GM12878 (cell line): ENCODE measurements at regions of chrX and their contacts with region 1.

Region 1: DNA sequence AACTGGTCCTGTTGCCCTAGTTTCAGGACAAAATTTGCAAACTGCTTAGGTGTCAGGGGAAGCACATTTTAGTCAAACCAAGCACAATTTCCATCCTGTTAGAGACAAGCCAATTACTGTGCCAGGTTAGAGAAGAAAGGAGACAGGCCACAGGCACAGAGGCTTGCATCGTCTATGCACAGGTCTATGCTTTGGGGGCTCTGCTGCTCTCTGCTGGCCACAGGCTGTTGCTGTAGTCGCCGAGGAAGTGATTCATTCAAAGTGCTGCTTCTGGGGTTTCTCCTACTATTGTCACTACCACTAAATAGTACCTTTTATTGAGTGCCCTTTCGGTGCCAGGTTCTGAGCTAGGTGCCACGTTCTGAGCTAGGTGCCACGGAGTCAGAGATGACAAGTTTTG is 45.5 kb downstream of the VGLL1 start:
- DNase-seq: no peak
- ATAC-seq: peak; percentile 100
- H3K4me3 ChIP-seq: no peak overlapping the region
- H3K27ac ChIP-seq: no peak overlapping the region
- H3K4me1 ChIP-seq: no peaks in the 10 kb centered on the region
- H3K27me3 ChIP-seq: no peaks in the 10 kb centered on the region
- CTCF ChIP-seq: peak; percentile 71 to 82 (median 82)
- EP300 ChIP-seq: no peak
- POLR2A ChIP-seq: no peak
- RAD21 ChIP-seq: peak; percentile 67

Region 2: GRCh38 chrX:136268051-136269048 is 309.2 kb before region 1 on chrX:
- CTCF ChIA-PET with region 1: interaction called, 7 read pairs
- POLR2A ChIA-PET with region 1: interaction called, 3 read pairs
- RAD21 ChIA-PET with region 1: no interaction called
- SMC1A ChIA-PET with region 1: no interaction called
- in situ Hi-C with region 1: no loop called
- intact Hi-C with region 1: loop called (anchors 10 kb)
- DNase-seq: no peak
- ATAC-seq: peak; percentile 91
- H3K4me3 ChIP-seq: no peak overlapping the region
- H3K27ac ChIP-seq: no peak overlapping the region
- H3K4me1 ChIP-seq: no peaks in the 10 kb centered on the region; the same call in 1 of the 2 replicates
- H3K27me3 ChIP-seq: no peaks in the 10 kb centered on the region
- CTCF ChIP-seq: peak; percentile 74 to 78 (median 76); a peak in 5 of 6 replicates
- EP300 ChIP-seq: no peak
- POLR2A ChIP-seq: no peak
- RAD21 ChIP-seq: peak; percentile 87

Region 3: DNA sequence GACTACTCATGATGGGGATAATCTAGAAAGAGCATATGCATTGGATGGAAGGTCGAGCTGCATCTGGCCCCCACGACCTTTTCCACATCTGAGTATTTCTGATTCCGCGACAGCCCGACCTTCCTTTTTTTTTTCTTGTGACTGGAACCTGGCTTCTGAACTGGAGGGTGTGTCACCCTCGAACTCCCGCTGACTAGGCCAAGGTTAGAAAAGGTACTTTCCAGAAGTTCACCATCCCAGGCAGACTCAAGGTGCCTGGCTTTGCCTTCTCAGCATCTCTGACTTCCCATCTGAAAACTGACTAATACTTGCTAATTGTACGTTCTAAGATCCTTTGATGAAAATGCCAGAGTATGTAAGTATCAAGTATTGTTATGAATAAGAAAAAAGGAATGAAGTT is 21.1 kb after region 1 on chrX:
- CTCF ChIA-PET with region 1: interaction called, 8 read pairs
- POLR2A ChIA-PET with region 1: no interaction called
- RAD21 ChIA-PET with region 1: no interaction called
- SMC1A ChIA-PET with region 1: interaction called, 17 read pairs
- in situ Hi-C with region 1: no loop called
- intact Hi-C with region 1: no loop called
- DNase-seq: no peak
- ATAC-seq: no peak; the same call in 2 of the 3 replicates
- H3K4me3 ChIP-seq: no peak overlapping the region
- H3K27ac ChIP-seq: no peak overlapping the region
- H3K4me1 ChIP-seq: no peaks in the 10 kb centered on the region
- H3K27me3 ChIP-seq: no peaks in the 10 kb centered on the region
- CTCF ChIP-seq: no peak
- EP300 ChIP-seq: no peak
- POLR2A ChIP-seq: no peak
- RAD21 ChIP-seq: no peak

Region 4: DNA sequence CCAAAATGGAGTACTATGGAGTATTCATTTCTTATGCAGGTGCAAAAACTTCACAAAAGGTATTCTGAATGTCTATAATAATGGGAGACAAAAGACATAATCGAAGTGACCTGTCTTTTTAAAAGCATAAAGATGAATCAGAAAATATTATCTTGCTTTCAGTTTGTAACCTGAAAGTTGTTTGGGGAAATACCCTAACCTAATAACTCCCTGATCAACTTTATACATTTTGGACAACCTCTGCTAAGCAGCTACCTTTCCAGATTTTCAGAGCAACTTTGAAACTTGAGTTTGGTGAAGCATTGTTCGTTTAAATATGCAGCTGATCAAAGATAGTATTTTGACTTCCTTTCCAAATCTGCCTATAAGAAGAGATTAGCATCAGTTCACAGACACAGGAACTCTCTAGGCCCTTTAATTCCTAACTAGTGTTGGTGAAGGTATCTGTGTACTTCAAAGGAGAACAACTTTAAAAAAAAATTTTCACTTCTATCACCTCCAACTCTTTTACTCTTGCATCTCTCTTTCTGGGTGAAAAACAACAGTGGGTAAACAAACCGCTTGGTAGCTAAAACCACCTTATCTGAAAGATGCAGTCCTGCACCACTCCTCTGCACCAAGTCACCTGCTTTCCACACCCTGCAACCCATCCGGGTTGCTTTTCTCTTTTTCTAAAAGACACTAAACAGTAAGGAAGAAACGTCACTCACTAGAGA is 96.9 kb after region 1 on chrX:
- CTCF ChIA-PET with region 1: interaction called, 4 read pairs
- POLR2A ChIA-PET with region 1: no interaction called
- RAD21 ChIA-PET with region 1: no interaction called
- SMC1A ChIA-PET with region 1: interaction called, 3 read pairs
- in situ Hi-C with region 1: no loop called
- intact Hi-C with region 1: loop called (anchors 5 kb)
- DNase-seq: no peak
- ATAC-seq: peak; percentile 56
- H3K4me3 ChIP-seq: peak overlapping the region; percentile 14; the same call in 1 of the 2 replicates
- H3K27ac ChIP-seq: peak overlapping the region; percentile 60
- H3K4me1 ChIP-seq: peaks cover 43% of the 10 kb centered on the region
- H3K27me3 ChIP-seq: no peaks in the 10 kb centered on the region
- CTCF ChIP-seq: no peak
- EP300 ChIP-seq: no peak
- POLR2A ChIP-seq: no peak
- RAD21 ChIP-seq: no peak